ENCODE measurements at regions of chr7 and their contacts with region 1.

Region 1: DNA sequence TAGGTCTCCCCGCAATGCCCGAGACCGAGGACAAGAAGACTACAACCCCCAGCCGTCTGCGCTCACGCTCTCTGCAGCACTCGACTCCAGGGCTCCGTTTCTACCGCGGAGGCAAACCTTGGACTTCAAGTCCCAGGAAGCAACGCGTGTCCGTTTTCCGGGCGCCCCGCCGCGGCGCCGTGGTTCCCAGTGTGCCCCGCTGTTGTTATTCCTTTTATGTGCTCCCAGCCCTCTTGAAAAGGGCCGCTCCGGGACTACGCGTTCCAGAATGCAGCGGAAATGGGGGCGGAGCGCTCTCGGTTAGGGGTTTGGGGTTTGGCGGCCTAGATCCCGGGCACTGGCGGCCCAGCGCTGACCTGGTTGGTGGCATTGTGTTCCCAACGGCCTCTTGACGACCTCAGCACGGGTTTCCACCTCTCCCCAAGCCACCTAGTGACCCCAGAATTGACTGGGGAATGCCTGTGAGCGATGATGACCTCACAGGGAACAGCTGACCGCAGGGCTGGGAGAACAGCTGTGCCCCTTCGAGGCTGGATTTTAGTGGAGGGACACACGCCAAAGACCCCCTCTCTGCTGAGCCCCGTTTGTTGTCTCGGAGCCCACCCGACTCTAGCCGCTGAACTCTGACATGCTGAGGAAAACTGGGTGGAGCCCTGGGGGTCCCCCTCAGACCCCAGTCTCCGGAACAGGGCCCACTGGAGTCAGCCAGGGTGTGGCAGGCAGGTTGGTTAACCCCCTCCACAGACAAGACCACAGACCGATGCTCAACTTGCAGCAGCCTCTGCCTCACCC is 488 bp upstream of the CDK5 start:
- DNase-seq: peak; percentile 99 to 100
- H3K4me3 ChIP-seq: peak overlapping the region; percentile 82
- H3K27ac ChIP-seq: peak overlapping the region; percentile 41
- H3K4me1 ChIP-seq: peaks cover 43% of the 10 kb centered on the region
- H3K27me3 ChIP-seq: no peaks in the 10 kb centered on the region
- CTCF ChIP-seq: no peak

Region 2: GRCh38 chr7:150898475-150899011 is 159.6 kb before region 1 on chr7:
- CTCF ChIA-PET with region 1: no interaction called
- POLR2A ChIA-PET with region 1: no interaction called
- intact Hi-C with region 1: loop called (anchors 1 kb)
- DNase-seq: peak in 1 of 2 experiments; percentile 82
- H3K4me3 ChIP-seq: no peak overlapping the region
- H3K27ac ChIP-seq: no peak overlapping the region
- H3K4me1 ChIP-seq: no peaks in the 10 kb centered on the region
- H3K27me3 ChIP-seq: peaks cover 29% of the 10 kb centered on the region
- CTCF ChIP-seq: peak; percentile 95

Region 3: GRCh38 chr7:151038951-151039849 is 19.0 kb before region 1 on chr7:
- CTCF ChIA-PET with region 1: no interaction called
- POLR2A ChIA-PET with region 1: interaction called, 3 read pairs
- intact Hi-C with region 1: loop called (anchors 1 kb)
- DNase-seq: peak; percentile 86 to 95
- H3K4me3 ChIP-seq: no peak overlapping the region; the same call in 1 of the 2 replicates
- H3K27ac ChIP-seq: peak overlapping the region; percentile 72
- H3K4me1 ChIP-seq: peaks cover 26% of the 10 kb centered on the region
- H3K27me3 ChIP-seq: no peaks in the 10 kb centered on the region
- CTCF ChIP-seq: no peak

Region 4: DNA sequence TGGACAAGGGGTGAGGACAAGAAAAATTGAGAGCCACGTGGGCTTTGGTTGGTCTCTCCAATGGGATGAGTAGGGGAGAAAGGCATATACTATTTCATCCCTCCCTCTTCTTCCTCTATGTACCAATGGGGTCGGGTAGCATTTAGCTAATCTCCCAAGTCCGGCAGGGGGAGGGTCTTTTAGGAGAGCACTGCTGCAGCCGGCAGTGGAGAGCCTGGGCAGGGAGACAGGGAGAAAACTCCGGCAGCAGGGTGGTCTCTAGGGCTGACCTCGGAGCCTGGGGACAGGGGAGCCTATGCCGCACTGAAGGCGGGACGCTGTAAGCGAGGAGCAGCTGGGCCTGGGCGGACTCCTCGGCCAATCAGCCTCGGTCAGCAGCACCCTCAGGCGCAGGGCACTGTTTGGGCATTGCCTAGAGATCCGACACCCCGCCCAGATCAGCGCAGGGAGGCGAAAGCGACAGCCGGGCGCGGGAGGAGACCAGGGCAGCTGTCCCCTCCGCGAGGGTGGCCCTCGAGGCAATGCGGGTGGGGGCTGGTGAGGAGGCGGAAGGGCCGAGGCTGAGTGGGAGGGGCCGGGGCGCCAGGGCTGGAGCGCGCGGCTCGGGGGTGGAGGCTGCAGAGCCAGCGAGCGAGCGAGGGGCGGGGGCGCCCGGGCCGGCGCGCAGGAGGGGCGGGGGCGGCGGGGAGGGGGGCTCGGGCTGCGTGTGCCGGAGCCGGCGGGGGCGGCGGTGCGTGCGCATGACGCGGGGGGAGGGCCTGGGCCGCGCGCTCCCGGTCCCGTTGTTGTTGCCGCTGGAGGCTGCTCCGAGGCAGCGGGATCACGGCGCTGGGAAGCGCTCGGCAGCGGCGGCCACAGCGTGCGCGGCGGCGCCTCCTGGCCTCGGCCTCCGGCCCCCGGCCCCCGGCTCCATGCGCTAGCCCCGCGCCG is 27.8 kb after region 1 on chr7 and contains the start of gene AGAP3:
- CTCF ChIA-PET with region 1: interaction called, 4 read pairs
- POLR2A ChIA-PET with region 1: interaction called, 8 read pairs
- intact Hi-C with region 1: loop called (anchors 1 kb)
- DNase-seq: peak; percentile 87 to 97
- H3K4me3 ChIP-seq: peak within 1 kb of the TSS; percentile 100
- H3K27ac ChIP-seq: peak within 1 kb of the TSS; percentile 41; the same call in 1 of the 2 replicates
- H3K4me1 ChIP-seq: peaks cover 47% of the 10 kb centered on the region
- H3K27me3 ChIP-seq: no peaks in the 10 kb centered on the region
- CTCF ChIP-seq: no peak
- total RNA-seq, gene AGAP3: 103 TPM in 2 replicates